MCF 10A (cell line): ENCODE measurements at regions of chr7 and their contacts with region 1.

Region 1: DNA sequence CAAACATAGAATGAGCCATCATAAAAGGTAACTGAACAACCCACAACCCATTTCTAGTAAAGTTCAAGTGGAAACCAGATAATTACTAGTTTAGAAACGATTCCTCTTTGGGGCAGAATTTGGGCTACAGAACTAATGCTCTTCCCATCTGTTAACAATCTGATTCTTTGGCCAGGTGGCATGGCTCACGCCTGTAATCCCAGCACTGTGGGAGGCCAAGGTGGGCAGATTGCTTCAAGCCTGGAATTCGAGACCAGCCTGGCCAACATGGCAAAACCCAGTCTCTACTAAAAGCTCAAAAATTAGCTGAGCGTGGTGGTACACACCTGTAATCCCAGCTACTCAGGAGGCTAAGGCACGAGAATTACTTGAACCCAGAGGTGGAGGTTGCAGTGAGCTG is 18.5 kb downstream of the CYP51A1 start:
- DNase-seq: no peak
- H3K4me3 Mint-ChIP-seq: no peak overlapping the region
- H3K27ac Mint-ChIP-seq: no peak overlapping the region
- H3K4me1 Mint-ChIP-seq: peaks cover 13% of the 10 kb centered on the region
- H3K27me3 Mint-ChIP-seq: no peaks in the 10 kb centered on the region
- CTCF ChIP-seq: no peak

Region 2: GRCh38 chr7:91653286-91653685 is 462.5 kb before region 1 on chr7:
- CTCF ChIA-PET with region 1: no interaction called
- POLR2A ChIA-PET with region 1: no interaction called
- intact Hi-C with region 1: no loop called
- DNase-seq: no peak
- H3K4me3 Mint-ChIP-seq: no peak overlapping the region
- H3K27ac Mint-ChIP-seq: no peak overlapping the region
- H3K4me1 Mint-ChIP-seq: peaks cover 6% of the 10 kb centered on the region
- H3K27me3 Mint-ChIP-seq: peaks cover 29% of the 10 kb centered on the region
- CTCF ChIP-seq: no peak

Region 3: GRCh38 chr7:91973639-91974038 is 142.2 kb before region 1 on chr7:
- CTCF ChIA-PET with region 1: no interaction called
- POLR2A ChIA-PET with region 1: no interaction called
- intact Hi-C with region 1: no loop called
- DNase-seq: no peak
- H3K4me3 Mint-ChIP-seq: no peak overlapping the region
- H3K27ac Mint-ChIP-seq: no peak overlapping the region
- H3K4me1 Mint-ChIP-seq: no peaks in the 10 kb centered on the region
- H3K27me3 Mint-ChIP-seq: no peaks in the 10 kb centered on the region
- CTCF ChIP-seq: no peak

Region 4: DNA sequence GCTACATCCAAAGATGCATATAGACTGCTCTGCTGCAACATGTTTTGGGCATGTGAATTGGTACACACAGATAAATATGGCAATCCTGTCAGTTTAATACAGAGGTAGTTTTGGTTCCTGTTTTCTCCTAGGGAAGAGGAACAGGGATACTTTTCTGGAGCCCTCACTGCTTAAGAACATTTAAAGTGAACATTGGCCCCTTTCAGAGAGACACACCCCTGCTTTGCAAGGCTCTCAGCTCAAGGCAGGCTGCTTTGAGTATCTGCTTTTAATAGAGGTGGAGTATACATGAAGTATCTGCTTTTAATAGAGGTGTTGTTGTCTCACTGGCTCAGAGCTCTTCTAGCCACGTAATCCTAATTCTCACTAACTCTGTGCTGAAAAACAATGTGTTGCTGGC is 20.4 kb before region 1 on chr7:
- CTCF ChIA-PET with region 1: no interaction called
- POLR2A ChIA-PET with region 1: no interaction called
- intact Hi-C with region 1: loop called (anchors 2 kb)
- DNase-seq: no peak
- H3K4me3 Mint-ChIP-seq: no peak overlapping the region
- H3K27ac Mint-ChIP-seq: no peak overlapping the region
- H3K4me1 Mint-ChIP-seq: no peaks in the 10 kb centered on the region
- H3K27me3 Mint-ChIP-seq: no peaks in the 10 kb centered on the region
- CTCF ChIP-seq: no peak

Region 5: DNA sequence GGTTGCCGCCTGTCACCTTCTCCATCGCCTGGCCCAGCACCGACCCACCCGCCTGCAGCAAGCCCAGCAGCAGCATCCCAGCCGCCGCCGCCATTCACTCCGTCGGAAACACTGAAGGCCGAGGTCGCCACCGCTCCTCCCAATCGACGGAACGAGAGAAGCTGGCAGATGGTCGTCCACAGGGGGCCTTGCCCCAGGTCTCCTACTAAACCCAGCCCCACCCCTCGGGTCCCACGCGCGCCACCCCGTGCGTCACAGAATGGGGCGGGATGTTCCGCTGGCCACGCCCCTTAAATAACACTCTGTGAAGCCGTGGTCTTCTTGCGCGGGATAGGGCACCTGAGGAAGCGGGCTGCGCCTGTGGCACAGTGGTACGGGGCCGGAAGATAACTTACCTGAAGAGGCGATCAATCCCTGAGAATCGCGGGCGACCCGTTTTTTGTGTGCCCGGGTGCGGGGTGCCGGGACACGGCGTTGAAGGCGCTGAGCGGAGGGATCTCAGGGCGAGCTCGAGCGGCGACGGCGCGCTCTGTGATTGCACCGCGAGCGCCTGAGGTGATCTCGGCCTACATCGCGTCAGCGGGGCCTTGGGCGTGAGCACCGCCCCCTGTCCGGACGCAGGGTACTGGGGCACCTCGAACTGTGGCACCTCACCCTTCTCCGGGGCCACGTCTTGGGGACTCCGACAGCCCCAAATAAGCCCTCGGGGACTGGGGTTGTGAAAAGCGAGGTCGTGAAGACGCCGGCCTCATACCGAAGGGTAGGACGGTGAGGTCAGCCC is 18.6 kb after region 1 on chr7 and contains the start of gene CYP51A1:
- CTCF ChIA-PET with region 1: interaction called, 14 read pairs
- POLR2A ChIA-PET with region 1: interaction called, 6 read pairs
- intact Hi-C with region 1: no loop called
- DNase-seq: peak; percentile 94
- H3K4me3 Mint-ChIP-seq: peak within 1 kb of the TSS; percentile 90
- H3K27ac Mint-ChIP-seq: peak within 1 kb of the TSS; percentile 98
- H3K4me1 Mint-ChIP-seq: peaks cover 27% of the 10 kb centered on the region
- H3K27me3 Mint-ChIP-seq: no peaks in the 10 kb centered on the region
- CTCF ChIP-seq: no peak
- total RNA-seq, gene CYP51A1: 124 and 148 TPM in 2 replicates